ENCODE measurements at regions of chrX and their contacts with region 1.

Region 1: DNA sequence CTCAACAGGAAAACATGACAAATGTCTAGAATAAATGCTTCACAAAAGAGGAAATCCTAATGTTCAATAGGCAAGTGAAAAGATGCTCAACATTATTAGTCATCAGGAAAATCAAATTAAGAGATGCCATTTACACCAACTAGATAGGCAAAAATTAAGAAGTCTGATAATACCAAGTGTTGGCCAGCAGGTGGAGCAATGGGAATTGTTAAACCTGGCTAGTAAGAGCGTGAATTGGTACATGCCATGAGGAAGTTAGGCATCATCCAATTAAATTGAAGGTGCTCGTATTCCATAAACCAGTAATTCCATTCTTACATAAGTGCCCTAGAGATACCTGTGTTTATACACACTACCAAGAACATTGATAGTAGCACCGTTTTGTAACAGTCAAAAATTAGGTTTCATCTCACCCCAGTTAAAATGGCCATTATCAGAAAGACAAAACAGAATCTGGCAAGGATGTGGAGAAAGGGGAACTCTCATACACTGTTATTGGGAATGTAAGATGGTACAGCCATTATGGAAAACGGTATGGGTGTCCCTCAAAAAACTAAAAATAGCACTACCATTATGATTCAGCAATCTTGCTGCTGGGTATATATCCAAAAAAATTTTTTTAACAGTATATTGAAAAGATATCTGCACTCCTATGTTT is 14.0 kb upstream of the ZCCHC18 start:
- DNase-seq: peak in 30 of 35 experiments; percentile 11 to 83 (median 42)
- ATAC-seq: peak; percentile 51 to 74 (median 70)
- H3K4me3 ChIP-seq: no peak overlapping the region
- H3K4me3 Mint-ChIP-seq: no peak overlapping the region
- H3K27ac ChIP-seq: no peak overlapping the region
- H3K27ac Mint-ChIP-seq: no peak overlapping the region
- H3K4me1 ChIP-seq: no peaks in the 10 kb centered on the region
- H3K4me1 Mint-ChIP-seq: peaks cover 0 to 5% (median 3%) of the 10 kb centered on the region in 3 donors
- H3K27me3 ChIP-seq: peaks cover 0 to 2% of the 10 kb centered on the region in 2 experiments
- H3K27me3 Mint-ChIP-seq: peaks cover 0 to 34% of the 10 kb centered on the region in 2 donors

Region 2: DNA sequence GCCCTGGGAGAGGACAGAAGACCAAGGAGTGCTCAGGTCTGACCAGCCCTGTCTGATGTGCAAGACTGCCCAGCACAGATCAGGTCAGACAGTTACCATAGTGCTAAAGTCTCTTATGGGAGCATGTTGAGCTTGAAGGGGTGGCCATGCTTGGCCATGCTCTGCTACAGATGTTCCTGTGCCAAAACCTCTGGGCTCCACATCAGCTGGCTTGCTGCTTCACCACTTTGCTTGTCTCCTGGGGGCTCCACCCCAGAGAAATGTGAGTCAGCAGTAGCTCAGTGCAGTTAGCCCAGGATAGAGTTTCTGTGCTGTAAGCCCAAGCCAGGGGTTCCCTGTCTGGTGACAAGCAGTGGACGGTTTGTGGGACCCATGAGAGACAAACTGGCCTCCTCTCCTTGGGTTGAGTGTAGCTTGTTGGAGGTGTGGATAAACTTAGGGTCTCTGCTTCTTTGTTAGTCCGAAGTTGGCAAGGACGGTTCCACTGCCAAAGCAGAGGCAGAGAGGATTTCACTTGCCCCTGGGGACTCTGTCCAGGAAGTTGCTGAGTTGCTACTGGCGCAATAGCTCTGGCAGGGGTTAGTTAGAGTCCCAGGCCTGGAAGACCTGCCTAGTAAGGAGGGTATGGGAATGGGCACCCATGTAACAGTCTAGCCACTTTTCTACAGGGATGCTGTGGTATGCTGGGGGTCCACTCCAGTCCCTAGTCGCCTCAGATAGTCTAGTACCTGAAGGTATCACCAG is 13.6 kb before region 1 on chrX:
- CTCF ChIA-PET with region 1: no interaction called
- POLR2A ChIA-PET with region 1: no interaction called
- DNase-seq: no peak
- ATAC-seq: no peak
- H3K4me3 ChIP-seq: no peak overlapping the region
- H3K4me3 Mint-ChIP-seq: no peak overlapping the region
- H3K27ac ChIP-seq: no peak overlapping the region
- H3K27ac Mint-ChIP-seq: no peak overlapping the region
- H3K4me1 ChIP-seq: no peaks in the 10 kb centered on the region
- H3K4me1 Mint-ChIP-seq: no peaks in the 10 kb centered on the region
- H3K27me3 ChIP-seq: peaks cover 0 to 18% of the 10 kb centered on the region in 2 experiments
- H3K27me3 Mint-ChIP-seq: peaks cover 9 to 11% of the 10 kb centered on the region in 2 donors

Region 3: DNA sequence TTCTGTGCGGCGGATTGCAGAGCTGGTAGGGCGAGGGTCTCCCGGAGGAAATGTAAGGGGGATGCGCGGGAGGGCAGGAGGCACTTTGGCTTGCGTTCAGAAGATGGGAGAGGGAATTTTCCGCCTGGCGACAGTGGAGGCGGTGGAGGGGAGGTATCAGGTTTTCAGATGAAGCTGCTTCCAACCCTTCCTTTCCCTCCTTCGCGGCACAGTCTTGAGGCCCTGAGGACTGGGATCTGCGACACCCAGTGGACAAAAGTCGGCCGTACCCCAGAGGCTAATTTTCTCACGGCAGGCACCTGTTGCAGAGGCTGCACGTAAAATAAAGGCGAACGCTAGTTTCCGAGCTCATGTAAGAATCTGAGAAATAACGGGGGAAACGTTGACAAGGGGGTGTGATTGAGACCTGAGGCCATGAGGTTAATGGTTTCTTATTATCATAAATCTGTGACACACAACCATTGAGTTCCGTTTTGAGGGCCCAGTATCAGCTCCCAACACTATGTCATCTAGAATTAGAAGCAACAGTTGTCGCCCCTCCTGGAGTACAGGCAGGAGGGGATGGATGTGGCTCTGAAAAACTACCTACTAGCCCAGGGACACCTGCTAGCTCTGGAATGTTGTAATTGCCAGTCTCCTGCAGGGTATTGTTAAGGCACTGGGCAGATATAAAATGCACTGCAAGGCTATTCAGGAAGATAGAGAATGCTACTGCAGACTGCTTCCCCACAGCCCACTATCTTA is 15.1 kb after region 1 on chrX:
- CTCF ChIA-PET with region 1: interaction called, 6 to 27 read pairs
- POLR2A ChIA-PET with region 1: interaction called in 1 of 2 experiments, 3 read pairs
- DNase-seq: peak in 32 of 35 experiments; percentile 10 to 72 (median 43)
- ATAC-seq: peak; percentile 54 to 62 (median 57)
- H3K4me3 ChIP-seq: peak overlapping the region; percentile 62 to 76
- H3K4me3 Mint-ChIP-seq: peak overlapping the region; percentile 81 to 88 (median 86)
- H3K27ac ChIP-seq: no peak overlapping the region
- H3K27ac Mint-ChIP-seq: peak overlapping the region; percentile 71 to 76
- H3K4me1 ChIP-seq: peaks cover 2 to 46% of the 10 kb centered on the region in 2 experiments
- H3K4me1 Mint-ChIP-seq: peaks cover 8 to 50% (median 29%) of the 10 kb centered on the region in 3 donors
- H3K27me3 ChIP-seq: no peaks in the 10 kb centered on the region
- H3K27me3 Mint-ChIP-seq: peaks cover 0 to 32% of the 10 kb centered on the region in 2 donors

Region 4: GRCh38 chrX:104136241-104137019 is 38.1 kb after region 1 on chrX:
- CTCF ChIA-PET with region 1: interaction called, 17 to 18 read pairs
- POLR2A ChIA-PET with region 1: no interaction called
- DNase-seq: peak in 30 of 35 experiments; percentile 15 to 82 (median 39)
- ATAC-seq: peak in 3 of 4 experiments; percentile 58 to 81 (median 72)
- H3K4me3 ChIP-seq: no peak overlapping the region
- H3K4me3 Mint-ChIP-seq: no peak overlapping the region
- H3K27ac ChIP-seq: no peak overlapping the region
- H3K27ac Mint-ChIP-seq: no peak overlapping the region
- H3K4me1 ChIP-seq: peaks cover 0 to 15% of the 10 kb centered on the region in 2 experiments
- H3K4me1 Mint-ChIP-seq: peaks cover 14 to 25% (median 20%) of the 10 kb centered on the region in 3 donors
- H3K27me3 ChIP-seq: no peaks in the 10 kb centered on the region
- H3K27me3 Mint-ChIP-seq: peaks cover 0 to 19% of the 10 kb centered on the region in 2 donors